ENCODE measurements at regions of chr6 and their contacts with region 1.

Region 1: DNA sequence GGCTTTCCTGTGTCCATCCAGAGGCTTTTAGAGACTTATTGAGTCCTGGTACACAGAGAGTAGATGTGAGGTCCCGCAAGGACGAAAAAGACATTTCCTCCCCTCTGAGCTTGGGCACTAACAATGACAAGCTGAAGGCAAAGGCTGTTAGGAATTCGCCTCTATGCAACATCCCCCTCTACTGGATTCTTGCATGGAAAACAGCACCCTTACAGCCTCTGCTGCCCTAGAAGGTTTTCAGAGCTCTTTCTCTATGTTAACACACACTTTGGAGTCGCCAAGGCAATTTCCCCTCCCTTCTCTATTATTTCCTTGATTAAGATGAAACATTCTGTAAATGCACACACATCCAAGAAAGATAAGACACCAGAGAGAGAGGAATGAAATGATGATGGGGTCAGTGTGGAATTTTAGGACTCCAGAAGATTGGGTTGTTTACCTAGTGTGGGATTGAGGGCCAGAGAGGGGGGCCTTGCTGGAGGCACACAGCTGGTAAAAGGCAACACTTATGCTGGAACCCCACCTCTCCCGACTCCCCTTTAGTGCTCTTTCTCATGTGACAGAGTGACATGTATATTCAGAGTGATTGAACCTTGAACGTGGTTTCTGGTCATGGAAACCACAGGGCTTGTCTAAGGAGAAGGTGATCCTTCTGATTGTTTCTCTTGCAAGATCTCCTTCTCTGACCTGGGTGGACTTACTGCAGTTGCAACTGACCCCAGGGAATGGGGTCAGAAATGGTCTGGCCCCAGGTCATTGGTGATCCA is 300.7 kb downstream of the CLIC5 start:
- DNase-seq: peak; percentile 74
- ATAC-seq: peak; percentile 97
- H3K4me3 ChIP-seq: no peak overlapping the region
- H3K27ac ChIP-seq: no peak overlapping the region
- H3K4me1 ChIP-seq: no peaks in the 10 kb centered on the region
- H3K27me3 ChIP-seq: peaks cover 0 to 5% of the 10 kb centered on the region in 2 experiments; a peak in 1 of 5 replicates
- CTCF ChIP-seq: peak; percentile 94
- EP300 ChIP-seq: no peak
- POLR2A ChIP-seq: no peak
- RAD21 ChIP-seq: peak; percentile 92

Region 2: DNA sequence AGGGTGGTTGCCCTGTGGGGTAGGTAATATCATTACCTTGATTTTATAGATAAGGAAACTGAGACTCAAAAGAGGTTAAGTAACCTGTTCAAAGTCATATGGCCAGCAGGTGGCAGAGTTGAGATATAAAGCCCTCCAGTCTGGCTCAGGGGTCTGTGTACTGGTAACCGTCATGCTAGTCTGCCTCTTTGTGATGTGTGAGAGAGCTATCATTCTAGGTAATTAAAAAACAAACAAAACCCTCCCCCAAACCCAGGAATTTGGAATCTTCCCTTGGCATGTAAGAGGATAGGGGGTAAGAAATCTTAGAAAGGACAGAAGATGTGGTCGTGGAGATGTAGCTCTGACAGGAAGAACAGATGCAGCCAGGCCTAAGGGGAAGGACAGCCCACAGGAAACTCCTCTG is 1121.4 kb before region 1 on chr6:
- CTCF ChIA-PET with region 1: interaction called, 8 read pairs
- POLR2A ChIA-PET with region 1: no interaction called
- in situ Hi-C with region 1: no loop called
- intact Hi-C with region 1: loop called (anchors 1 kb)
- DNase-seq: peak; percentile 68
- ATAC-seq: peak; percentile 84
- H3K4me3 ChIP-seq: no peak overlapping the region
- H3K27ac ChIP-seq: no peak overlapping the region
- H3K4me1 ChIP-seq: no peaks in the 10 kb centered on the region
- H3K27me3 ChIP-seq: peaks cover 0 to 2% of the 10 kb centered on the region in 2 experiments; a peak in 2 of 5 replicates
- CTCF ChIP-seq: peak; percentile 66
- EP300 ChIP-seq: no peak
- POLR2A ChIP-seq: no peak
- RAD21 ChIP-seq: no peak

Region 3: DNA sequence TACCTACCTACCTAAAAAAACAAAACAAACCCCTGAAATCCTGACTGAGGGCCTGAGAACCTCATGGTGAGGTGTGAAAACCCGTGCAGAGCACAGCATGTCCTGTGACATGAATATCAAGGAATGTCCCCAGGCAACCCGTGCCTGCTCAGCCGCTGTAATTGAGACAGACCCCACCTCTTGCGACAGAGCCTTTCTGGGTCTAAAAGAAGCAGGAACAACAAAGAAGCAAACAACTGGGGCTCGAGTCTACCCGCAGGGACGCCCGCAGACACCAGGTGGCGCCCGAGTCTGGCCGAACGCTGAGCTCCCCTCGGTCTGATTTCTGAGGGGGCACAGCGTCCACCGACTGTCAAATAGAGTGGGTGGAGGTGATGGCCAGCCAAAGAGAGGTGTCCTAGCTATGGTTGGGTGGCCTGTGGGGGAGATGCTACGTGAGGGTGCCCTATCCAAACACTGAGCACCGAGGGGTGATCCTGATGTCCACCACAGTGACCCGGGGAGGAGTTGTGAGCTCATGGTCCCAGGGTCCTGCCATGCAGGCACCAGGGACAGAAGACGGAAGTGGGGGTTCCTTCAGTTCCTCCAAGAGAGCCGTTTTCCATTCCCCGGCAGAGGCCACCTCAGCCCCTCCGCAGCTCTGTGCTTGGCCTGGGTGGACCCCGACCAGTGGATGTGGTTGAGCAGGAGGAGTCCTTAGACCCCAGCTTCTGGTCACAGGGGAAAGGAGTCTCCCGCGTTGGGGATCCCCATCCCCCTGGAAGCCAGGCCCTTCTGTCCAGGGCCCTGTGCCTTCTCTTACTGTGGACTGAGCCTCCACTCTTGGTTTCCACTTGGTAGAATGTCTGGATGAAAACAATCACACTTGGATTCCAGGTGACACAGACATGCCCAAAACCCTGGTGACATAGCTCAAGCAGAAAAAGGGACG is 1059.2 kb before region 1 on chr6:
- CTCF ChIA-PET with region 1: interaction called, 41 read pairs
- POLR2A ChIA-PET with region 1: interaction called, 4 read pairs
- in situ Hi-C with region 1: loop called (anchors 5 kb)
- intact Hi-C with region 1: loop called (anchors 1 kb)
- DNase-seq: peak; percentile 63
- ATAC-seq: peak; percentile 90
- H3K4me3 ChIP-seq: no peak overlapping the region
- H3K27ac ChIP-seq: no peak overlapping the region
- H3K4me1 ChIP-seq: peaks cover 14% of the 10 kb centered on the region
- H3K27me3 ChIP-seq: peaks cover 0 to 24% of the 10 kb centered on the region in 2 experiments; a peak in 3 of 5 replicates
- CTCF ChIP-seq: peak; percentile 98
- EP300 ChIP-seq: no peak
- POLR2A ChIP-seq: no peak
- RAD21 ChIP-seq: peak; percentile 95

Region 4: GRCh38 chr6:45500924-45501816 is 213.8 kb before region 1 on chr6:
- CTCF ChIA-PET with region 1: interaction called, 4 read pairs
- POLR2A ChIA-PET with region 1: no interaction called
- in situ Hi-C with region 1: no loop called
- intact Hi-C with region 1: loop called (anchors 1 kb)
- DNase-seq: peak; percentile 71
- ATAC-seq: peak; percentile 99
- H3K4me3 ChIP-seq: no peak overlapping the region
- H3K27ac ChIP-seq: no peak overlapping the region
- H3K4me1 ChIP-seq: no peaks in the 10 kb centered on the region
- H3K27me3 ChIP-seq: peaks cover 0 to 16% of the 10 kb centered on the region in 2 experiments; a peak in 2 of 5 replicates
- CTCF ChIP-seq: peak; percentile 69
- EP300 ChIP-seq: no peak
- POLR2A ChIP-seq: no peak
- RAD21 ChIP-seq: peak; percentile 38; the same call in 1 of the 2 replicates

Region 5: DNA sequence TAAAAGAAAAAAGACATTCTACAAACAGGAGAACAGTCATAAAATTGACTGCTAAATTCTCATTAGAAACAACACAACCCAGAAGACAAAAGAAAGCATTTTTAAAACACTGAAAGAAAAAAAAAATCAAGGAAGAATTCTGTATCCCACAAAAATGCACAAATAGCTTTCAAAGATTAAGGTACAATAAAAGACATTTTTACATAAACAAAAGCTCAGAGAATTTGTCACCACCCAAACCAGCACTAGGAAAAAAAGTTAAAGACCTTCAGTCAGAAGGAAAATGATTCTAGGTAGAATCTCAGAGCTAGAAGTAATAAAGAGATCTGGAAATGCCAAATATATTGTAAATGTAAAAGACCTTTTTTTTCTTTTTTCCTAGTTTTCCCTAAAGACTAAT is 48.4 kb after region 1 on chr6:
- CTCF ChIA-PET with region 1: no interaction called
- POLR2A ChIA-PET with region 1: no interaction called
- in situ Hi-C with region 1: no loop called
- intact Hi-C with region 1: no loop called
- DNase-seq: no peak
- ATAC-seq: no peak
- H3K4me3 ChIP-seq: no peak overlapping the region
- H3K27ac ChIP-seq: no peak overlapping the region
- H3K4me1 ChIP-seq: no peaks in the 10 kb centered on the region
- H3K27me3 ChIP-seq: peaks cover 0 to 8% of the 10 kb centered on the region in 2 experiments; a peak in 2 of 5 replicates
- CTCF ChIP-seq: no peak
- EP300 ChIP-seq: no peak
- POLR2A ChIP-seq: no peak
- RAD21 ChIP-seq: no peak